Mammary epithelial cell (primary cell): ENCODE measurements at regions of chr18 and their contacts with region 1.

Region 1: DNA sequence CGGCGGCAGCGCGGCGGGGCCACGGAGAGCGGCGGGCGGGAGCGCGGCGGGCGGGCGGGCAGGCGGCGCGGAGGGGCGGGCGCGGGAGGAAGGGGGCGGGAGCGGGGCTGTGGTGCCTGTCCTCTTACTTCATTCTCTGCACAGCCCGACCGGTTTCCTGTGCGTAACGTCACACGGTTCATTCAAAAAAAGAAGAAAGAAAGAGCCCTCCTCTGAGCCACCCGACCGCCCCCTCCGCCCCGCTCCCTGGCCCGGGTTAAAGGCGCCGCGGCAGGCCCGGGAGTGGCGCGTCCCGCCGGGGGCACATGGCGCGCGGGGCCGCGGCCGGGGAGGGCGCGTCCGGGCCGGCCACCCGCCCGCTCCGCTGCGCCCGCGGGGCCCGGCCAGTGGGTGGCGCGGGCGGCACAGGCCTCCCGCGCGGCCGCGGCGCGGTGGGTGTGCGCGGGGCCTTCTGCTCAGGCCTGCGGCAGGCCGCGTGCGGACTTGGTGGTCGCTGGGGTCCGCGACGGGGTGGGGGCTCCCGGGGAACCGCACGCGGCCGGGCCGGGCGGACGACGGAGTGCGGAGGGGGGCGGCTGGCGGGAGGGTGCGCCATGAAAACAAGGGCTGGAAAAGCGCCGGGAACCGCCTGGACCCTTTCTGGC is 599 bp upstream of the BCL2 start:
- DNase-seq: peak; percentile 72
- H3K4me3 ChIP-seq: peak overlapping the region; percentile 27 to 64 (median 43)
- H3K27ac ChIP-seq: no peak overlapping the region
- H3K4me1 ChIP-seq: peaks cover 14% of the 10 kb centered on the region
- H3K27me3 ChIP-seq: peaks cover 4% of the 10 kb centered on the region
- CTCF ChIP-seq: no peak

Region 2: DNA sequence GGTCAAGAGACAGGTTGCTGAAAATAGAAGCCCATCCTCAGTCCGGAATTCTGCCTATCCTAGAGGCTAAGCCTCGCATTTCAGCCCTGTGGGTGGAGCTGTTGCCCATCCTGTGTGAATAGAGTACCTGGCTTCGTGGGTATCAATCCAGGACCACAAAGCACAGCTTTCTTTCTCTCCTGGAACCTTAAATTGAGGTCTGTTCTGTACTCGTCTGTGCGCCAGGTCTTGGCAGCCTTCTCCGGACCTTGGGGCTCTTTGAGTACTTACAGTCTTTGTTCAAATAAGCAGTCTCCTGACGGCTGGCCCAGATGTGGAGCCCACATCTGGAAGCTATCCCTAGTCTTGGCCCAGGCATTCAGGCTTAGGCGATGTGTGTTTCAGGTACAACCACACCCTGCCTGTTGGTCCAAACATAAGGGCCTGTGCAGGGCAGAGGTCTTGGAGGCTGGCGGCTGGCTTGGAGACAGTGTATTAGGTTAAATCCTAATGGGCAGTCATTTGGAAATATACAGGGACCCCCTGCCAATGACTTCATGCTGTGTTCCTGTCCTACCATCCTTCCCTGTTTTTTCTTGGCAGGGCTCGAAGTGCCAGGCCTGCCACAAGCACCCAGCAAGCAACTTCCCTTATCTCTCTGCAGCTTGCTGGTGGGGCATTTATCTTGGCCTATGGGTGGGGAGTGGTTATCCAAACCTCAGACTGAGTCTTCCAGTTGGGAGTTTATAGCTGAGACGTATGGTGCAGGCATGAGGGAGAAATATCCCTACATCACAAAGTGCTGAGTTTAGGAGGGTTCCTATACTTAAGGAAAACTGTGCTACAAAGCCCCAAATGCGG is 294.7 kb before region 1 on chr18:
- CTCF ChIA-PET with region 1: interaction called, 12 read pairs
- dilution Hi-C with region 1: no loop called
- in situ Hi-C with region 1: no loop called
- intact Hi-C with region 1: loop called (anchors 1 kb)
- DNase-seq: peak; percentile 3
- H3K4me3 ChIP-seq: no peak overlapping the region
- H3K27ac ChIP-seq: no peak overlapping the region
- H3K4me1 ChIP-seq: no peaks in the 10 kb centered on the region
- H3K27me3 ChIP-seq: no peaks in the 10 kb centered on the region
- CTCF ChIP-seq: peak; percentile 45 to 50

Region 3: GRCh38 chr18:63131106-63131958 is 188.8 kb before region 1 on chr18:
- CTCF ChIA-PET with region 1: interaction called, 4 read pairs
- dilution Hi-C with region 1: no loop called
- in situ Hi-C with region 1: loop called (anchors 5 to 10 kb)
- intact Hi-C with region 1: loop called (anchors 1 kb)
- DNase-seq: peak; percentile 32
- H3K4me3 ChIP-seq: no peak overlapping the region
- H3K27ac ChIP-seq: no peak overlapping the region
- H3K4me1 ChIP-seq: no peaks in the 10 kb centered on the region
- H3K27me3 ChIP-seq: no peaks in the 10 kb centered on the region
- CTCF ChIP-seq: peak; percentile 40 to 69

Region 4: GRCh38 chr18:63175264-63175663 is 144.9 kb before region 1 on chr18:
- CTCF ChIA-PET with region 1: no interaction called
- dilution Hi-C with region 1: no loop called
- in situ Hi-C with region 1: no loop called
- intact Hi-C with region 1: no loop called
- DNase-seq: no peak
- H3K4me3 ChIP-seq: no peak overlapping the region
- H3K27ac ChIP-seq: no peak overlapping the region
- H3K4me1 ChIP-seq: no peaks in the 10 kb centered on the region
- H3K27me3 ChIP-seq: peaks cover 4% of the 10 kb centered on the region
- CTCF ChIP-seq: no peak

Region 5: GRCh38 chr18:63410792-63411191 is 90.6 kb after region 1 on chr18:
- CTCF ChIA-PET with region 1: interaction called, 11 read pairs
- dilution Hi-C with region 1: no loop called
- in situ Hi-C with region 1: no loop called
- intact Hi-C with region 1: no loop called
- DNase-seq: peak; percentile 80
- H3K4me3 ChIP-seq: no peak overlapping the region
- H3K27ac ChIP-seq: peak overlapping the region; percentile 73
- H3K4me1 ChIP-seq: peaks cover 42% of the 10 kb centered on the region
- H3K27me3 ChIP-seq: no peaks in the 10 kb centered on the region
- CTCF ChIP-seq: no peak

Region 6: GRCh38 chr18:63454497-63454896 is 134.3 kb after region 1 on chr18:
- CTCF ChIA-PET with region 1: no interaction called
- dilution Hi-C with region 1: no loop called
- in situ Hi-C with region 1: no loop called
- intact Hi-C with region 1: no loop called
- DNase-seq: peak; percentile 94
- H3K4me3 ChIP-seq: no peak overlapping the region
- H3K27ac ChIP-seq: peak overlapping the region; percentile 99
- H3K4me1 ChIP-seq: peaks cover 44% of the 10 kb centered on the region
- H3K27me3 ChIP-seq: no peaks in the 10 kb centered on the region
- CTCF ChIP-seq: no peak

Region 7: GRCh38 chr18:63799189-63799588 is 479.0 kb after region 1 on chr18:
- CTCF ChIA-PET with region 1: no interaction called
- dilution Hi-C with region 1: no loop called
- in situ Hi-C with region 1: no loop called
- intact Hi-C with region 1: no loop called
- DNase-seq: no peak
- H3K4me3 ChIP-seq: no peak overlapping the region
- H3K27ac ChIP-seq: no peak overlapping the region
- H3K4me1 ChIP-seq: no peaks in the 10 kb centered on the region
- H3K27me3 ChIP-seq: no peaks in the 10 kb centered on the region
- CTCF ChIP-seq: no peak